CD4-positive, alpha-beta T cell (primary cell): ENCODE measurements at regions of chr9 and their contacts with region 1.

Region 1: GRCh38 chr9:97954550-97954989 is 16.6 kb upstream of the HEMGN start:
- DNase-seq: peak; percentile 38 to 84 (median 48)
- ATAC-seq: peak; percentile 93
- H3K4me3 ChIP-seq: no peak overlapping the region
- H3K4me3 Mint-ChIP-seq: no peak overlapping the region
- H3K27ac ChIP-seq: no peak overlapping the region
- H3K27ac Mint-ChIP-seq: no peak overlapping the region
- H3K4me1 ChIP-seq: peaks cover 7% of the 10 kb centered on the region
- H3K4me1 Mint-ChIP-seq: peaks cover 4% of the 10 kb centered on the region
- H3K27me3 ChIP-seq: no peaks in the 10 kb centered on the region
- H3K27me3 Mint-ChIP-seq: no peaks in the 10 kb centered on the region
- CTCF ChIP-seq: peak; percentile 81

Region 2: DNA sequence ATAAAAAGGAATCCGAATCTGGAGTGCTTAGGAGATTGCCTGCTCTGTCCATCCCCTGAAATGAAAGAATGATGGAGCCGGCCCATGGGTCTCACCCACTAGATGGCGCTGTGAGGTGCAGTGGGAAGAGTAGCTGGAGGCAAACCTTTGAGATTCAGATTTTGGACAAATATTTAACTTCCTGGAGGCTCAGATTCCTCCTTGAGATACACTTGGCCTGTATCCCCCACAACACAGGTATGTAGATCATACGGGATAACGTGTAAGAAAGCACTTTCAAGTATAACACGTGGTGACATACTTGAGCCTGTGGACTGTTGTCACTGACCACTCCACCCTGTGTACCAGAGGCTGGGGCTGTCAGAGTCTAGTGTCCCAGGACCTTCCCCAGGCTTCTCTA is 64.5 kb before region 1 on chr9:
- CTCF ChIA-PET with region 1: interaction called, 4 read pairs
- POLR2A ChIA-PET with region 1: no interaction called
- intact Hi-C with region 1: loop called (anchors 2 to 5 kb)
- DNase-seq: peak; percentile 53 to 82 (median 64)
- ATAC-seq: peak; percentile 74
- H3K4me3 ChIP-seq: no peak overlapping the region
- H3K4me3 Mint-ChIP-seq: no peak overlapping the region
- H3K27ac ChIP-seq: no peak overlapping the region
- H3K27ac Mint-ChIP-seq: peak overlapping the region; percentile 50
- H3K4me1 ChIP-seq: peaks cover 10% of the 10 kb centered on the region
- H3K4me1 Mint-ChIP-seq: peaks cover 12% of the 10 kb centered on the region
- H3K27me3 ChIP-seq: no peaks in the 10 kb centered on the region
- H3K27me3 Mint-ChIP-seq: no peaks in the 10 kb centered on the region
- CTCF ChIP-seq: peak; percentile 86

Region 3: DNA sequence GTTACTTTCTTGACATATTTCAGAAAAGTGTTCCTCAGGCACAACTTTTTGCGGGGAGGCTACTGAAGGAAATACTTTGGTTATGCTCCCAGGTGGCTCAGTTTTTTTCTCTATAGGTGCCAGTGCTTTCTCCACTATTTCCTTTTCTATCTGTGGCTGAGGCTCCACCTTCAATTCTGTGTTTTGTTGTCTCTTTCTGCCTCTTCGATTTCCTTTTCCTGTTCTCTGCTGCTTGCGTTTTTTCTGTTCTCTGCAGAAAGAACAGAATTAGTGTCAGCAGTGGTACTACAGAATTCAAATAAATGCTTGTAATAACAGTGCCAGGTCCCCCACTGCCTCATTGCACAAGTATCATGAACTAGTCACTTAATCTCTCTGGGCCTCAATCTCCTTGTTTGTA is 23.6 kb before region 1 on chr9:
- CTCF ChIA-PET with region 1: no interaction called
- POLR2A ChIA-PET with region 1: interaction called, 3 read pairs
- intact Hi-C with region 1: loop called in 1 of 2 experiments (anchors 2 kb)
- DNase-seq: peak in 4 of 14 experiments; percentile 36 to 72 (median 45)
- ATAC-seq: peak; percentile 83
- H3K4me3 ChIP-seq: no peak overlapping the region
- H3K4me3 Mint-ChIP-seq: peak overlapping the region; percentile 46
- H3K27ac ChIP-seq: peak overlapping the region; percentile 62
- H3K27ac Mint-ChIP-seq: peak overlapping the region; percentile 86
- H3K4me1 ChIP-seq: peaks cover 34% of the 10 kb centered on the region
- H3K4me1 Mint-ChIP-seq: peaks cover 78% of the 10 kb centered on the region
- H3K27me3 ChIP-seq: no peaks in the 10 kb centered on the region
- H3K27me3 Mint-ChIP-seq: no peaks in the 10 kb centered on the region
- CTCF ChIP-seq: no peak

Region 4: GRCh38 chr9:98034593-98035546 is 80.3 kb after region 1 on chr9:
- CTCF ChIA-PET with region 1: interaction called, 3 read pairs
- POLR2A ChIA-PET with region 1: no interaction called
- intact Hi-C with region 1: loop called in 1 of 2 experiments (anchors 1 kb)
- DNase-seq: peak; percentile 82 to 97 (median 92)
- ATAC-seq: peak; percentile 99
- H3K4me3 ChIP-seq: no peak overlapping the region
- H3K4me3 Mint-ChIP-seq: no peak overlapping the region
- H3K27ac ChIP-seq: no peak overlapping the region
- H3K27ac Mint-ChIP-seq: no peak overlapping the region
- H3K4me1 ChIP-seq: peaks cover 6% of the 10 kb centered on the region
- H3K4me1 Mint-ChIP-seq: peaks cover 5% of the 10 kb centered on the region
- H3K27me3 ChIP-seq: no peaks in the 10 kb centered on the region
- H3K27me3 Mint-ChIP-seq: no peaks in the 10 kb centered on the region
- CTCF ChIP-seq: peak; percentile 86